Panc1 (cell line): ENCODE measurements at regions of chr5 and their contacts with region 1.

Region 1: GRCh38 chr5:135887351-135887864 is 8.2 kb downstream of the IL9 start:
- DNase-seq: peak; percentile 50
- ATAC-seq: peak; percentile 98
- H3K4me3 ChIP-seq: no peak overlapping the region
- H3K27ac ChIP-seq: no peak overlapping the region
- H3K4me1 ChIP-seq: no peaks in the 10 kb centered on the region
- H3K27me3 ChIP-seq: no peaks in the 10 kb centered on the region; the same call in 1 of the 2 replicates
- CTCF ChIP-seq: peak; percentile 88

Region 2: DNA sequence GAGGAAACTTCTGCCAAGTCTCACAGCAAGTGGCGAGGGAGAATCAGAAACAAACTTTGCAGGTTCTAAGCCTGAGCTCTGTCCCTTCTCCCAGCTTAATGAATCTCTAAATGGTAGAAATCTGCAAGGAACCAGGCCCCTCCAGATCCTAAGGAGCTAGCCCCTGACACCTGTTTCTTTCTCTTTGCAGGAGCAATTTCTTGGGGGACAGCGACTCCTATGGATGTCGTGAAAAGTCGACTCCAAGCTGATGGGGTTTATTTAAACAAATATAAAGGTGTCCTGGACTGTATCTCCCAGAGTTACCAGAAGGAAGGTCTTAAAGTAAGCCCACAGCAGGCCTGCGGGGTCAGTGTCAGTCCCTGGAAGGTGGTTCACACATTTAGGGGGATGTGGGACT is 13.6 kb before region 1 on chr5:
- CTCF ChIA-PET with region 1: no interaction called
- POLR2A ChIA-PET with region 1: no interaction called
- in situ Hi-C with region 1: no loop called
- intact Hi-C with region 1: no loop called
- DNase-seq: no peak
- ATAC-seq: no peak
- H3K4me3 ChIP-seq: no peak overlapping the region
- H3K27ac ChIP-seq: no peak overlapping the region
- H3K4me1 ChIP-seq: no peaks in the 10 kb centered on the region
- H3K27me3 ChIP-seq: peaks cover 2% of the 10 kb centered on the region; the same call in 1 of the 2 replicates
- CTCF ChIP-seq: peak; percentile 53

Region 3: GRCh38 chr5:136062366-136063274 is 175.2 kb after region 1 on chr5:
- CTCF ChIA-PET with region 1: interaction called, 6 read pairs
- POLR2A ChIA-PET with region 1: no interaction called
- in situ Hi-C with region 1: no loop called
- intact Hi-C with region 1: loop called (anchors 5 kb)
- DNase-seq: no peak
- ATAC-seq: no peak
- H3K4me3 ChIP-seq: no peak overlapping the region
- H3K27ac ChIP-seq: no peak overlapping the region
- H3K4me1 ChIP-seq: peaks cover 16% of the 10 kb centered on the region
- H3K27me3 ChIP-seq: no peaks in the 10 kb centered on the region
- CTCF ChIP-seq: peak; percentile 72

Region 4: GRCh38 chr5:136080483-136081216 is 193.2 kb after region 1 on chr5:
- CTCF ChIA-PET with region 1: no interaction called
- POLR2A ChIA-PET with region 1: no interaction called
- in situ Hi-C with region 1: no loop called
- intact Hi-C with region 1: loop called (anchors 2 kb)
- DNase-seq: no peak
- ATAC-seq: no peak
- H3K4me3 ChIP-seq: no peak overlapping the region
- H3K27ac ChIP-seq: no peak overlapping the region
- H3K4me1 ChIP-seq: no peaks in the 10 kb centered on the region
- H3K27me3 ChIP-seq: no peaks in the 10 kb centered on the region
- CTCF ChIP-seq: no peak

Region 5: DNA sequence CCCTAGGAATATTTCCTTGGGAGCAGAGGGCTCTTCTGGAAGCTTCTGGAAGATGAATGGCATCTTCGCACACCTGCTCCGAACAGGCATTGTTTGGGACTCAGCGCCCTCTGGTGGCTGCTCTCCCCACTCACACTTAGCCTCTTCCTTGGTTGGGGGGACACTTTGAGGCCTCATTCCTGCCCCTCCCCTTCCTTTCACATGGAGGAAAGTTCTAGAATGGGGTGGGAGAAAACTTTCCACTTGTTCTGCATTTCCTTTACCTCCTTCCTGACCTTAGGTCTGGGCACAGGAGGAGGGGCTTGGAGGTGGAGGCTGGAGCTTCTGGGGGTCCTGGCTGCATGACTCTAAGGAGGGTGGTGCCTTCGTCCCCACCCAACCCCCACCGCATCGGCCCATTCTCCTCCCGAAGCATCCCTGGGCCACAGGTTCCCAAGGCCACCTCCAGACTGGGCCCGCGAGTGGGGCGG is 324.9 kb after region 1 on chr5:
- CTCF ChIA-PET with region 1: no interaction called
- POLR2A ChIA-PET with region 1: no interaction called
- in situ Hi-C with region 1: no loop called
- intact Hi-C with region 1: loop called (anchors 2 kb)
- DNase-seq: peak; percentile 57
- ATAC-seq: peak; percentile 67; the same call in 1 of the 2 replicates
- H3K4me3 ChIP-seq: no peak overlapping the region
- H3K27ac ChIP-seq: no peak overlapping the region
- H3K4me1 ChIP-seq: no peaks in the 10 kb centered on the region; the same call in 1 of the 2 replicates
- H3K27me3 ChIP-seq: no peaks in the 10 kb centered on the region
- CTCF ChIP-seq: peak; percentile 92

Region 6: GRCh38 chr5:136769900-136770684 is 882.7 kb after region 1 on chr5:
- CTCF ChIA-PET with region 1: no interaction called
- POLR2A ChIA-PET with region 1: no interaction called
- in situ Hi-C with region 1: no loop called
- intact Hi-C with region 1: loop called (anchors 10 kb)
- DNase-seq: peak; percentile 48
- ATAC-seq: peak; percentile 92
- H3K4me3 ChIP-seq: no peak overlapping the region
- H3K27ac ChIP-seq: no peak overlapping the region
- H3K4me1 ChIP-seq: no peaks in the 10 kb centered on the region
- H3K27me3 ChIP-seq: peaks cover 10% of the 10 kb centered on the region
- CTCF ChIP-seq: peak; percentile 91